Activated B cell treated with CpG ODN at 0.5 μM for 24 hours (primary cell): ENCODE measurements at regions of chr2 and their contacts with region 1.

Region 1: GRCh38 chr2:100541404-100541803 is 21.4 kb upstream of the PDCL3 start:
- DNase-seq: no peak
- ATAC-seq: no peak
- H3K4me3 Mint-ChIP-seq: no peak overlapping the region
- H3K27ac Mint-ChIP-seq: no peak overlapping the region
- H3K4me1 Mint-ChIP-seq: no peaks in the 10 kb centered on the region
- H3K27me3 Mint-ChIP-seq: peaks cover 3% of the 10 kb centered on the region
- CTCF ChIP-seq: no peak

Region 2: GRCh38 chr2:100556746-100557145 is 15.3 kb after region 1 on chr2:
- CTCF ChIA-PET with region 1: no interaction called
- POLR2A ChIA-PET with region 1: interaction called, 12 read pairs
- intact Hi-C with region 1: no loop called
- DNase-seq: no peak
- ATAC-seq: no peak
- H3K4me3 Mint-ChIP-seq: no peak overlapping the region
- H3K27ac Mint-ChIP-seq: no peak overlapping the region
- H3K4me1 Mint-ChIP-seq: peaks cover 4% of the 10 kb centered on the region
- H3K27me3 Mint-ChIP-seq: no peaks in the 10 kb centered on the region
- CTCF ChIP-seq: no peak